ENCODE measurements at regions of chr9 and their contacts with region 1.

Region 1: DNA sequence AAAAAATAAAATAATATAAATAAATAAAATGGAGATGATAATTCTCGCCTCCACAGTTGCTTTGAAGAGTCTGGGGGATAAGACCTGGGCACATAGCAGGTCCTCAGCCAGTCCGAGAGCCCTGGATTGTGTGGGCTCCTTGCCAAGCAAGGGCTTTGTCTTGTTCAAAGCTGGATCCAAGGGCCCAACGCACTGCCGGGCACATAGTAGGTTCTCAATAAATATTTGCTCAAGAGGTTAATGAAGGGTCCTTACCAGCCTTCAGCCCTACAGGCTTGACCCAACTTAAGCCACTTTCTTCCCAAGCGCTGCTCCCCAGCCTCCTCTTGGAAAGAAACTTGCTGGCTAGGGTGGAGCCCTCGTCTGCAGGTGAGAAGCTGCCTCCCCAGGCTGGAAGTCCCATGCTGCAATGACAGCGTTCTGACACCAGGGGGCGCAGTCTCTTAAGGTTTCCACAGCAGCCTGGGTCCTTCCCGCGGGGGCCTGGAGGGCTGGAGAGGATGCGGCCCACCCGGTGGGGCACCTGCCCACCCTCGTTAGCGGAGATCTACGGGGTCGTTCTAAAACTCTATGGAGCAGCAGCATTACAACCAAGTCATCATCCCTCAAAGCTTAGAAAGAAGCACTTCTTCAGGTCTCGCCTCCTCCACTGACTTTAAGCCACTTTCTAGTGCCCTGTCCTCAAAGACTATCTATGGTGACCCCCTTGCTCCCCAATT is 115.2 kb downstream of the LHX2 start:
- DNase-seq: peak; percentile 74
- ATAC-seq: peak; percentile 64 to 75

Region 2: DNA sequence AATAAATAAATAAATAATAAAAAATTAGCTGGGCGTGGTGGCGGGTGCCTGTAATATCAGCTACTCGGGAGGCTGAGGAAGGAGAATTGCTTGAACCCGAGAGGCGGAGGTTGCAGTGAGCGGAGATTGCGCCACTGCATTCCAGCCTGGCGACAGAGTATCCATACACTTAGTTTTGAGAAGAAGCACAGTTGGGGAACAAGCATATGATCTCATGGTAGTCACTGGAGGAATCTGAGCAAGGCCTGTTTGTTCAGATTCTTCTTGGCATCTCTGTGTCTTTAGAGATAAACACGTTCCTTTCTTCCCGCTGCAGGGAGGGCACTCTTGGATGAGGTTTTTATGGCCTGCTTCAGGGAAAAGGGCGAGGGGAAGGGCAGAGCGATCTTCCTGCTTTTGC is 181.2 kb before region 1 on chr9:
- intact Hi-C with region 1: no loop called
- DNase-seq: no peak
- ATAC-seq: no peak

Region 3: DNA sequence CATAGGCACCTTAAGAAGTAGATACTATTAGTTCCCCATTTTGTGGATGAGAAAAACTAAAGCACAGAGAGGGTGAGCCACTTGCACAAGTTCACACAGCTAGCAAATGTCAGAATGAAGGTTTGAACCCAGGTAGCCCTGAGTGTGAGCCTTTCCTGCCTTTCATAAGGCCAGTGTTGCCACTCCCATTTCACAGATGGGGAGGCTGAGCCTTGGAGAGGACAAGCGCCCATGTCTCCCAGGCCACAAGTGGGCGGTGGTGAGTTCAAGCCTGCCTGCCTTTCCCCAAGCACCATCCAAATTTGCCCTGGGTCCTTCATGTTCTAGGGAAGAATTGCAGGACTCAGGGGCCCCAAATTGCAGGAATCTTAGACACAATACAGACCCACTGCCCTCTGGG is 64.6 kb before region 1 on chr9:
- intact Hi-C with region 1: no loop called
- DNase-seq: no peak
- ATAC-seq: no peak

Region 4: GRCh38 chr9:124149992-124150391 is 23.3 kb after region 1 on chr9:
- intact Hi-C with region 1: no loop called
- DNase-seq: no peak
- ATAC-seq: no peak

Region 5: GRCh38 chr9:124222918-124223720 is 96.4 kb after region 1 on chr9:
- intact Hi-C with region 1: no loop called
- DNase-seq: peak; percentile 90
- ATAC-seq: peak; percentile 58 to 66

Region 6: GRCh38 chr9:124239249-124240073 is 112.7 kb after region 1 on chr9:
- intact Hi-C with region 1: loop called in 1 of 2 experiments (anchors 10 kb)
- DNase-seq: no peak
- ATAC-seq: peak in 1 of 2 donors; percentile 37

Region 7: DNA sequence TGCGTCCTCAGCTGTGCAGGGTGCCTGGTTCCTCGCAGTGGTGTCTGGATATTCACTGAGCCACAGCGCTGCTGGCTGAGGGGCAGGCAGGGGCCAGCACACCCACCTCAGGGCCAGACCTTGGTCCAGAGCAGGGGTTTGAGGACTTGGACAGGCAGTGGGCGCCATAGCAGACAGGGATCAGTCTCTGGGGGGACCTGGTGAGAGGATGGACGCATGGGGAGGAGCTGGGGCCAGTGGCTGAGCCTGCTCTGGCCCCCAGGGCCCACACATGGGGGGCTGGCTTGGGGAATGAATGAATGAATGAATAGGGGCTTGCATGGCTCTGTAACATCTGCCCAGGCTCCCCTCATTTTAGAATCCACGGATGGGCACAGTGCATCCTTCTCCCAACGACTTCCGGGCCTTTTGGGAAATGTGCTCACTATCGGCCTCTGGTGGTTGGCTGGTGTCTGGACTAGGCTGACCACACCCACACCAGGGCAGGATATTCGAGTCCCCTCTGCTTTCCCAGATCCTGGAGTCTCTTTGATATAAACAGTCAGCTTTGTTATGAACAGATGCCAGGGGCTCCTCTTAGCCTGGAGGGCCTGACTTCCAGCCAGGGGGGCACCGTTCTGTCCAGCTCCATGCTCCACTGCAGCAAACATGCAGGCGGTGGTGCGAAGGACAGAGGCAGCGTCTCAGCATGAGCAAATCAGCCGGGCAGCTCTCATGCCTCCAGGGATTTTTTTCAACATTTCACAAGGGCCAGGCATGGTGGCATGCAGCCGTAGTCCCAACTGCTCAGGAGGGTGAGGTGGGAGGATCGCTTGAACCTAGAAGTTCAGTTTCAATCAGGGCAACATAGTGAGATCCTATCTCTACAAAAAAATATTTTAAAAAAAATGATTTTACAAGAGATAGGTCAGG is 193.6 kb after region 1 on chr9:
- intact Hi-C with region 1: loop called (anchors 1 to 5 kb)
- DNase-seq: peak; percentile 73
- ATAC-seq: peak; percentile 83 to 92

Region 8: DNA sequence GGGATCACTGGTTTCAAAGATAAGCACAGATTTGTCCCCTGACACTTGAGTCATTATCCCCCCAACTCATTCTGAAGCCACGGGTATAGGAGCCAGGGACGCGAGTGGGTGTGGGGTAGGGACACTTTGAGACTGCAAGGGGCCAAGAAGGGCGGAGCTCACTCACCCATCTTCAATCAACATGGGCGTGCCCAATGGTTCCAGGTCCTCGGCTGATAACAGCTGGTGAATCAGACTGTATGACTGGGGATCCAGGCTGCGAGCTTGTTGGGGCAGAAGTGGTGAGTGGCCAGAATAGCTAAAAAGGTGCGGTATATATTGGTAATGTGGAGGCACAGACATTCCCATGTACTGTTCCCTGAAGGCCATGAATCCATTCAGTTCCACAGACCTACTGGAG is 411.2 kb after region 1 on chr9:
- intact Hi-C with region 1: loop called in 1 of 2 experiments (anchors 5 kb)
- DNase-seq: no peak
- ATAC-seq: no peak

Measured in left cardiac atrium (tissue), 4 donors.